Activated B cell treated with CpG ODN at 0.5 μM for 24 hours (primary cell): ENCODE measurements at regions of chr2 and their contacts with region 1.

Region 1: DNA sequence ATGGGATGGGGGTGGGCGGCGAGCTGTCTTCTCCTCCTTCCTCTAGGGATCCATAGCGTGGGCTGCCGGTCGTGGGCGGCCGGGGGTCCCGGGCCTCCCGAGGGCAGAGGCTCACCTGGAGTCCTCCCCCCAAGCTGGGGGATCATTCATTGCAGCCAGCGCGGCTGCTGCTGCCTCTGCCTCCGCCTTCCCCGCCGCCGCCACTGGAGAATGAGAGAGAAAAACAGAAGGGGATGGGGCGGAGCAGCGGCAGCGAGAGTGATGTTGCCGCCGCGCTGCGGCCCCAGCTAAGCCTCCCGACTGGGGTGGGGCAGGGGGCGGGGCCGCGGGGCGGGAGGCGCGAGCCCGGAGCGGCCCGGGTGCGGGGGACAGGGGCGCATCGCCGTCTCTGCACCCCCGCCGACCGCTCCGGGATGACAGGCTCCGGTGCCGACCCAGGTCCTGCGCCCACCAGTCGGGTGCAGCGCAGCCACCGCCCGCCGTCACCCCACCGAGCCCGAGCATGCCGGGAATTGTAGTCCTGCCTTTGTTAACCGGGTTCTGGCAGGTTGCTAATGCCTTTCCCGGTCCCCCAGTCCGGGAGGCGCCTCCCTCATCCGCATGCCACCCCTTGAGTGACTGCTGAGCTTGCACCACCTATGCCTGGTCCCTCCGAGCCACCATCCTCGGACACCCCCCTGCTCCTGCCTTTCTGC is at the start of gene KIF3C:
- DNase-seq: peak; percentile 60
- ATAC-seq: peak; percentile 86
- H3K4me3 Mint-ChIP-seq: peak within 1 kb of the TSS; percentile 86
- H3K27ac Mint-ChIP-seq: peak within 1 kb of the TSS; percentile 18
- H3K4me1 Mint-ChIP-seq: no peaks in the 10 kb centered on the region
- H3K27me3 Mint-ChIP-seq: no peaks in the 10 kb centered on the region
- CTCF ChIP-seq: no peak
- total RNA-seq, gene KIF3C: 1.5 and 1.8 TPM in 2 replicates

Region 2: GRCh38 chr2:25673300-25674076 is 308.9 kb before region 1 on chr2 and contains the start of gene DTNB:
- CTCF ChIA-PET with region 1: no interaction called
- POLR2A ChIA-PET with region 1: no interaction called
- intact Hi-C with region 1: loop called (anchors 5 kb)
- DNase-seq: peak; percentile 83
- ATAC-seq: peak; percentile 79
- H3K4me3 Mint-ChIP-seq: peak within 1 kb of the TSS; percentile 88
- H3K27ac Mint-ChIP-seq: peak within 1 kb of the TSS; percentile 72
- H3K4me1 Mint-ChIP-seq: peaks cover 15% of the 10 kb centered on the region
- H3K27me3 Mint-ChIP-seq: no peaks in the 10 kb centered on the region
- CTCF ChIP-seq: no peak
- total RNA-seq, gene DTNB: 18.3 and 28.9 TPM in 2 replicates

Region 3: GRCh38 chr2:26068602-26069298 is 86.3 kb after region 1 on chr2:
- CTCF ChIA-PET with region 1: no interaction called
- POLR2A ChIA-PET with region 1: interaction called, 11 read pairs
- intact Hi-C with region 1: no loop called
- DNase-seq: no peak
- ATAC-seq: peak; percentile 81
- H3K4me3 Mint-ChIP-seq: no peak overlapping the region
- H3K27ac Mint-ChIP-seq: peak overlapping the region; percentile 63
- H3K4me1 Mint-ChIP-seq: peaks cover 45% of the 10 kb centered on the region
- H3K27me3 Mint-ChIP-seq: no peaks in the 10 kb centered on the region
- CTCF ChIP-seq: no peak

Region 4: DNA sequence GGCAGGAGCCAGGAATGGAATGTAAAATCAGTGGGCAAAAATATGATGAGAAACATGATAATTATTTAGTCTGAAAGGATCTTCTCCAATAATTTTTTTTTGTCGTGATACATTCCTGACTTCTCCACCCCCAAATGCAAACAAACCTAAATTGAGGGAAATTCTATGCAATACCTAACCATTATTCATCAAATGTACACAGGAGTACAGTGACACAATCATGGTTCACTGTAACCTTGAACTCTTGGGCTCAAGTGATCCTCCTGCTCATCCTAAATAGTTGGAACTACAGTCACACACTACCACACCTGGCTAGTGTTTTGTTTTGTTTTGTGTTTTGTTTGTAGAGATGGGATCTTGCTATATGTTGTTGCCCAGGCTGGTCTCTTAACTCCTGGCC is 97.9 kb after region 1 on chr2:
- CTCF ChIA-PET with region 1: no interaction called
- POLR2A ChIA-PET with region 1: no interaction called
- intact Hi-C with region 1: no loop called
- DNase-seq: no peak
- ATAC-seq: no peak
- H3K4me3 Mint-ChIP-seq: no peak overlapping the region
- H3K27ac Mint-ChIP-seq: no peak overlapping the region
- H3K4me1 Mint-ChIP-seq: peaks cover 11% of the 10 kb centered on the region
- H3K27me3 Mint-ChIP-seq: no peaks in the 10 kb centered on the region
- CTCF ChIP-seq: no peak